ENCODE measurements at regions of chr10 and their contacts with region 1.

Region 1: GRCh38 chr10:6473901-6474370 is 106.1 kb downstream of the PRKCQ start:
- DNase-seq: peak in 5 of 9 experiments; percentile 15 to 86 (median 46)
- ATAC-seq: peak; percentile 77
- H3K4me3 ChIP-seq: peak overlapping the region; percentile 42 to 46
- H3K4me3 Mint-ChIP-seq: peak overlapping the region; percentile 90
- H3K27ac ChIP-seq: peak overlapping the region; percentile 63 to 95
- H3K27ac Mint-ChIP-seq: peak overlapping the region; percentile 99
- H3K4me1 ChIP-seq: peaks cover 24% of the 10 kb centered on the region
- H3K4me1 Mint-ChIP-seq: peaks cover 59% of the 10 kb centered on the region
- H3K27me3 ChIP-seq: no peaks in the 10 kb centered on the region
- H3K27me3 Mint-ChIP-seq: no peaks in the 10 kb centered on the region
- CTCF ChIP-seq: no peak

Region 2: DNA sequence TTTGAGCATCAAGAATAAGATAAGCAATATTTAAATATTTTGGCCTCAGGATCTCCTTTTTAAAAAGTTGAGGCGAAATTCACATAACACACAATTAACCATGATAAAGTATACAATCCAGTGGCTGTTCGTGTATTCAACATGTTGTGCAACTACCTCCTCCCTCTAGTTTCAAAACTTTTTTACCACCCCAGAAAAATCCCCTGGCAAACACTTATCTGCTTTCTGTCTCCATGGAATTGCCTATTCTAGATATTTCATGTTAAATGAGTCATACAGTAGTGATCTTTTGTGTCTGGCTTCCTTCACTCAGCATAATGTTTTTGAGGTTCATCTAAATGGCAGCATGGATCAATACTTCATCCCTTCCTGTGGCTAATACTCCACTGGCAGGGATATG is 464.8 kb before region 1 on chr10:
- CTCF ChIA-PET with region 1: no interaction called
- POLR2A ChIA-PET with region 1: no interaction called
- intact Hi-C with region 1: no loop called
- DNase-seq: no peak
- ATAC-seq: no peak
- H3K4me3 ChIP-seq: no peak overlapping the region
- H3K4me3 Mint-ChIP-seq: no peak overlapping the region
- H3K27ac ChIP-seq: no peak overlapping the region
- H3K27ac Mint-ChIP-seq: no peak overlapping the region
- H3K4me1 ChIP-seq: peaks cover 4% of the 10 kb centered on the region
- H3K4me1 Mint-ChIP-seq: peaks cover 5% of the 10 kb centered on the region
- H3K27me3 ChIP-seq: no peaks in the 10 kb centered on the region
- H3K27me3 Mint-ChIP-seq: peaks cover 19% of the 10 kb centered on the region
- CTCF ChIP-seq: no peak

Region 3: DNA sequence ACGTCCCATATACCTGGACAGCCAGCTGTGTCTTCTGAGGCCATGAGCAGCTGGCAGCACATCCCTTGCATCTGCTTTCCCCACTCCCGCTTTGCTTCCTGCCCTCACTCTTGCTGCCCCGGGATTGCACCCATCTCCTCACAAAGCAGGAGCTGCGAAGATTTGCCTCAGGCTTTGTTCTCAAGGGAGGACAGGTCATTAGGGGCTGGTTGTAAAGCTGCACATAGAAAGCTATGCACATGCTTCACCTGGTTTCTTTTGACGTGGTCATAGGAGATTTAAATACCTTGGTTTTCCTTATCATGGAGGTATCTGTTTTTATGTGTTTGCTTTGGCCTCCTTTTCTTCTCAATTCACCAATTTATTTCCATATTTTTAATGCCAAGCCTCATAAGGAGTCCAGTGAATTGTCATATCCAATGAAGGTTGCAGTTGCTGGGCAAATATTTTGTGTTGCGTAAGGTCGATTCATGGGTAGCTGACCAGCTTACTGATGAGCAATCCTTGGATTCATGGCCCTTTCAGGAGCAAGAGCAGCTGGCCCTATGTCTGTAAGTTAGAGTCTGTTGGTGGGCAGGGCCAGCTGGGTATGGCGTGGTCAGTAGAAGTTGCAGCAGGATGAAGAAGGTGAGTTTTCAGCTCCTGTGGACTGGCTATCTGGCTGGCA is 88.4 kb before region 1 on chr10:
- CTCF ChIA-PET with region 1: no interaction called
- POLR2A ChIA-PET with region 1: no interaction called
- intact Hi-C with region 1: no loop called
- DNase-seq: no peak
- ATAC-seq: no peak
- H3K4me3 ChIP-seq: no peak overlapping the region
- H3K4me3 Mint-ChIP-seq: no peak overlapping the region
- H3K27ac ChIP-seq: no peak overlapping the region
- H3K27ac Mint-ChIP-seq: no peak overlapping the region
- H3K4me1 ChIP-seq: peaks cover 15% of the 10 kb centered on the region
- H3K4me1 Mint-ChIP-seq: peaks cover 24% of the 10 kb centered on the region
- H3K27me3 ChIP-seq: no peaks in the 10 kb centered on the region
- H3K27me3 Mint-ChIP-seq: no peaks in the 10 kb centered on the region
- CTCF ChIP-seq: no peak

Region 4: GRCh38 chr10:6416892-6417512 is 56.9 kb before region 1 on chr10:
- CTCF ChIA-PET with region 1: no interaction called
- POLR2A ChIA-PET with region 1: no interaction called
- intact Hi-C with region 1: loop called in 1 of 2 experiments (anchors 10 kb)
- DNase-seq: peak in 2 of 9 experiments; percentile 65 to 75
- ATAC-seq: peak; percentile 72
- H3K4me3 ChIP-seq: no peak overlapping the region
- H3K4me3 Mint-ChIP-seq: no peak overlapping the region
- H3K27ac ChIP-seq: no peak overlapping the region
- H3K27ac Mint-ChIP-seq: no peak overlapping the region
- H3K4me1 ChIP-seq: no peaks in the 10 kb centered on the region
- H3K4me1 Mint-ChIP-seq: no peaks in the 10 kb centered on the region
- H3K27me3 ChIP-seq: no peaks in the 10 kb centered on the region
- H3K27me3 Mint-ChIP-seq: no peaks in the 10 kb centered on the region
- CTCF ChIP-seq: peak; percentile 74

Region 5: GRCh38 chr10:6498771-6499170 is 24.8 kb after region 1 on chr10:
- CTCF ChIA-PET with region 1: interaction called, 4 read pairs
- POLR2A ChIA-PET with region 1: interaction called, 15 read pairs
- intact Hi-C with region 1: loop called in 1 of 2 experiments (anchors 1 kb)
- DNase-seq: peak in 7 of 9 experiments; percentile 42 to 89 (median 52)
- ATAC-seq: peak; percentile 72
- H3K4me3 ChIP-seq: no peak overlapping the region
- H3K4me3 Mint-ChIP-seq: peak overlapping the region; percentile 55
- H3K27ac ChIP-seq: peak overlapping the region; percentile 0 to 87
- H3K27ac Mint-ChIP-seq: peak overlapping the region; percentile 94
- H3K4me1 ChIP-seq: peaks cover 36% of the 10 kb centered on the region
- H3K4me1 Mint-ChIP-seq: peaks cover 31% of the 10 kb centered on the region
- H3K27me3 ChIP-seq: no peaks in the 10 kb centered on the region
- H3K27me3 Mint-ChIP-seq: no peaks in the 10 kb centered on the region
- CTCF ChIP-seq: no peak

Region 6: DNA sequence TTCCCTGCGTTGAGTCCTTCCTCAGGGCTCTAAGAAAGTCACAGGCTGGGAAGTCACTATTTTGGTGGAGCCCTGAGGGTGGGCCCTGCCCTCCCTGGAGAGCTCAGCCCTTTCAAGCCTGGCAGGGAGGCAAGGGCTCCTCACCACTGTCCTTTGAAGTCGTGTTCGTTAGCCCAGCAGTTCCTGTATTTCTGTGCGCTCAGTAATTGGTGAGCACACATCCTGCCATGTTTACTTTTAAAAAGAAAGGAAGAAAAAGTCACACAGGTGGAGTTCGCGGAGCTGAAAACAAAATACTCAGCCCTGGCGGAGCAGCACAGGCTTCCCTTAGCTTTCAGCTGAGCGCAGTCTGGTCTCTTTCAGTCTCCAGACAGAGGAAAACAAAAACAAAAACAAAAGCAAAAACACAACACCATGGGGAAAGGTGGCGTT is 69.1 kb after region 1 on chr10:
- CTCF ChIA-PET with region 1: interaction called, 6 read pairs
- POLR2A ChIA-PET with region 1: interaction called, 11 read pairs
- intact Hi-C with region 1: loop called in 1 of 2 experiments (anchors 5 kb)
- DNase-seq: peak in 8 of 9 experiments; percentile 39 to 85 (median 66)
- ATAC-seq: peak; percentile 74
- H3K4me3 ChIP-seq: peak overlapping the region; percentile 33 to 40
- H3K4me3 Mint-ChIP-seq: peak overlapping the region; percentile 88
- H3K27ac ChIP-seq: peak overlapping the region; percentile 78 to 92
- H3K27ac Mint-ChIP-seq: peak overlapping the region; percentile 99
- H3K4me1 ChIP-seq: peaks cover 68% of the 10 kb centered on the region
- H3K4me1 Mint-ChIP-seq: peaks cover 78% of the 10 kb centered on the region
- H3K27me3 ChIP-seq: no peaks in the 10 kb centered on the region
- H3K27me3 Mint-ChIP-seq: no peaks in the 10 kb centered on the region
- CTCF ChIP-seq: no peak

Region 7: DNA sequence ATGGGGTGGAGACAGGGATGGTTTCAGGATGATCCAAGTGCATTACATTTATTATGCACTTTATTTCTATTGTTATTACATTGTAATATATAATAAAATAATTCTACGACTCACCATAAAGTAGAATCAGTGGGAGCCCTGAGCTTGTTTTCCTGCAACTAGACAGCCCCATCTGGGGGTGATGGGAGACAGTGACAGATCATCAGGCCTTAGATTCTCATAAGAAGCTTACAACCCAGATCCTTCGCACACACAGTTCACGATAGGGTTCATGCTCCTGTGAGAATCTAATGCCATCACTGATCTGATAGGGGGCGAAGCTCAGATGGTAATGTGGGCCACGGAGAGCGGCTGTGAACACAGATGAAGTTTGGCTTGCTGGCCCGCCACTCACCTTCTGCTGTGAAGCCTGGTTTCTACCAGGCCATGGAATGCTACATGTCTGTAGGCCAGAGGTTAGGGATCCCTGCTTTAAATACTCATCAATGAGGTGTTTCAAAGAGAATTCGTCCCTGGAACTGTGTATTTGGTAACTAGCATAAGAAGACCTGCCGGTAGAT is 127.4 kb after region 1 on chr10:
- CTCF ChIA-PET with region 1: interaction called, 9 read pairs
- POLR2A ChIA-PET with region 1: interaction called, 5 read pairs
- intact Hi-C with region 1: loop called (anchors 1 to 2 kb)
- DNase-seq: peak in 6 of 9 experiments; percentile 41 to 69 (median 54)
- ATAC-seq: peak; percentile 52
- H3K4me3 ChIP-seq: no peak overlapping the region
- H3K4me3 Mint-ChIP-seq: peak overlapping the region; percentile 40
- H3K27ac ChIP-seq: peak overlapping the region; percentile 21 to 45
- H3K27ac Mint-ChIP-seq: peak overlapping the region; percentile 92
- H3K4me1 ChIP-seq: peaks cover 67% of the 10 kb centered on the region
- H3K4me1 Mint-ChIP-seq: peaks cover 83% of the 10 kb centered on the region
- H3K27me3 ChIP-seq: no peaks in the 10 kb centered on the region
- H3K27me3 Mint-ChIP-seq: no peaks in the 10 kb centered on the region
- CTCF ChIP-seq: peak; percentile 63

Measured in CD8-positive, alpha-beta T cell (primary cell).